Motor neuron (in vitro differentiated cells): ENCODE measurements at regions of chr1 and their contacts with region 1.

Region 1: GRCh38 chr1:168439456-168440375 is 104.1 kb downstream of the XCL2 start:
- ATAC-seq: peak; percentile 95 to 100 (median 96)
- H3K4me3 ChIP-seq: peak overlapping the region in 1 of 5 donors; percentile 2
- H3K27ac ChIP-seq: no peak overlapping the region
- H3K4me1 ChIP-seq: peaks cover 0 to 7% of the 10 kb centered on the region in 2 donors

Region 2: DNA sequence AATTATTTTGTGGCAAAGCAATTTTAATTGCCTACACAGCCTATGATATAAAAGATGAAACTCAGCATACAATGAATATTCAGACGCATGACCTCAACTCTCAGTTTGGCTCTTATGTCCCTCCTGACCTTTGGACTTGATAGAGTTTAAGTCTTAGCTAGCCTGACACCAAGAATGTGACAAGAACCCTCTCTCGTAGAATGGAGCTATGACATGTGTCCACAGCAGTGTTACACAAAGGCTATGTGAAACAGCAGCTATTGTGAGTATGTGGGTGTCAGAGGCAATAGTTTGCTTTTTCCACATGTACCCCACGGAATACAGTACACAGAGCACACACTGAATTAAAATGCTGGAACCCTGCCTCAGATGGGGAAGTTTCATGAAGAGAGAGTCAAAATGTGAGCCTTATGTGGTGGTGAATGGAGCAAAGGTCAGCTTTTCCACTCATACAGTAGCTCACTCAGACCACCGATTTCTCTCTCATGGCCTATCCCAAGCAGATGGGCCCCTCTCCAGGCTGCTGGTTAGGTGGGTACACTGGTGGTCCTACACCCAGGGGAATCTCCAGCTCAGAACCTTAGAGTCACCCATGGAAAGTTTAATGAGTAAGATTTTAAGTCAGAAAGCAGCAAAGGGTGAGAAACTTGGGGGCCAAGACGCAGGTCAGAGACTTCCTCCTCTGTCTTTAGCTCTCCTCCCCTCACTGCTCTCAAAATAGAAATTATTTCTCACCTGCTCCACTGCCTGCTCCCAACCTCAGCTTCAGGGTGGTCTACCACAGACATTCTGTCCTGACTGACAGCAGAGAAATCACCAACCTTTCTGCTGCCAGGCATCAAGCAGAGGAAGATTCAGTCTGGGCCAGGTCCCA is 114.2 kb after region 1 on chr1:
- in situ Hi-C with region 1: loop called in 3 of 9 experiments (anchors 25 kb)
- ATAC-seq: no peak
- H3K4me3 ChIP-seq: no peak overlapping the region
- H3K27ac ChIP-seq: no peak overlapping the region
- H3K4me1 ChIP-seq: no peaks in the 10 kb centered on the region

Region 3: GRCh38 chr1:168572633-168573032 is 132.9 kb after region 1 on chr1:
- in situ Hi-C with region 1: loop called in 4 of 9 experiments (anchors 10 to 25 kb)
- ATAC-seq: no peak
- H3K4me3 ChIP-seq: no peak overlapping the region
- H3K27ac ChIP-seq: no peak overlapping the region
- H3K4me1 ChIP-seq: no peaks in the 10 kb centered on the region

Region 4: DNA sequence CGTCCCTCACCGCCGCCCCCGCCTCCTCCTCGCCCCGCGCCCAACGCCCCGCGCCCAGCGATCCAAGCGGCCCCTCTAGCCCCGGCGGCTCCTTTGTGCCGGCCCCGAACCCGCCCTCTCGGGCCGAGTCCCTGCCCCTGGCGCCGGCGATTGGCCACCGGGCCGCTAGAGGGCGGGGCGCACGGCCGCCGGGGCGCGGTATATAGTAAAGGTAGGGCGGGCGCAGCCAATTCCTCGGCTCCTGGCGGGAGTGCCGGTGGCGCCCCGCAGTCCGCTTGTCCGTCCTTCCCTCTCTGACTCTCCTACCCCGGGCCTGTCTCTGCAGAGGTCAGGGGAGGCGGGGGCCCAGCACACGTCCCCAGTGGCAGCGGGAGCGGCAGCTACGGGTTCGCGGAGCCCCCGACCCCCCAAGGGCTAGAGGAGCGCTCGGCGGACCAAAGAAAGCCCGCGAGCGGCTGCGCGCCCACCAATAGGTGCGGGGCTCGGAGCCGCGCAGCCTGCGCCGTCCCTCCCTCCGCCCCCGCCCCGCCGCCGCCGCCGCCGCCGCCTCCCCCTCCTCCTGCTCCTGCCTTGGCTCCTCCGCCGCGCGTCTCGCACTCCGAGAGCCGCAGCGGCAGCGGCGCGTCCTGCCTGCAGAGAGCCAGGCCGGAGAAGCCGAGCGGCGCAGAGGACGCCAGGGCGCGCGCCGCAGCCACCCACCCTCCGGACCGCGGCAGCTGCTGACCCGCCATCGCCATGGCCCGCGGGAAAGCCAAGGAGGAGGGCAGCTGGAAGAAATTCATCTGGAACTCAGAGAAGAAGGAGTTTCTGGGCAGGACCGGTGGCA is 666.6 kb after region 1 on chr1 and contains the start of gene ATP1B1:
- in situ Hi-C with region 1: loop called in 1 of 9 experiments (anchors 25 kb)
- ATAC-seq: peak; percentile 78 to 89 (median 83)
- H3K4me3 ChIP-seq: peak within 1 kb of the TSS; percentile 63 to 99 (median 96)
- H3K27ac ChIP-seq: peak within 1 kb of the TSS; percentile 84 to 94
- H3K4me1 ChIP-seq: peaks cover 29 to 41% of the 10 kb centered on the region in 2 donors
- total RNA-seq, gene ATP1B1: 4.6 to 271 (median 153) TPM